Breast epithelium (tissue), 4 donors: ENCODE measurements at regions of chr1 and their contacts with region 1.

Region 1: GRCh38 chr1:201655243-201655642 is 116.3 kb downstream of the NAV1 start:
- DNase-seq: peak in 1 of 2 donors; percentile 25
- H3K4me3 ChIP-seq: no peak overlapping the region
- H3K27ac ChIP-seq: peak overlapping the region in 1 of 2 donors; percentile 26
- H3K4me1 ChIP-seq: peaks cover 0 to 4% of the 10 kb centered on the region in 2 donors
- H3K27me3 ChIP-seq: no peaks in the 10 kb centered on the region
- CTCF ChIP-seq: no peak
- POLR2A ChIP-seq: no peak

Region 2: GRCh38 chr1:201637680-201638079 is 17.6 kb before region 1 on chr1:
- intact Hi-C with region 1: loop called (anchors 1 kb)
- DNase-seq: no peak
- H3K4me3 ChIP-seq: no peak overlapping the region
- H3K27ac ChIP-seq: no peak overlapping the region
- H3K4me1 ChIP-seq: no peaks in the 10 kb centered on the region
- H3K27me3 ChIP-seq: no peaks in the 10 kb centered on the region
- CTCF ChIP-seq: no peak
- POLR2A ChIP-seq: no peak